Posterior cingulate gyrus (tissue), 11 donors: ENCODE measurements at regions of chr7 and their contacts with region 1.

Region 1: DNA sequence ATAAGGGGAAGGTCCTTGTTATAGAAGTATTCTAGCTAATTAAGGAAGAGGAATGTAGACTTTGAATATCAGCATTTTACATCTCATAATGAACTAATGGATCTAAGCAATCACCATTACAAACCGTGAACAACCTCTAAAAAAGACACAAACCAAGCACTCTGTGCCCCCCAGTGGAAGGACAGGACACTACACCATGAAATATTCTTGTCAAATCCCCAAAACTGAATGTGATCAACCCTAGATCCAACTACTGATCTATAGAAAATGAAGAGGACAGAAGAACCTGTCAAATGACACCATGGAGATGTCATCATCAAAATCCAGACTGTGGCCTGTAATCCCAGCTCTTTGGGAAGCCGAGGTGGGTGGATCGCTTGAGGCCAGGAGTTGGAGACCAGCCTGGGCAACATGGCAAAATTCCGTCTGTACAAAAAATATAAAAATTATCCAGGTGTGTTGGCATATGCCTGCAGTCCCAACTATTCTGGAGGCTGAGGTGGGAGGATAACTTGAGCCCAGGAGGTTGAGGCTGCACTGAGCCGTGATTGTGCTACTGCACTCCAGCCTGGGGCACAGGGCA is 111.3 kb upstream of the CARD11 start:
- DNase-seq: no peak

Region 2: GRCh38 chr7:2864999-2865670 is 289.9 kb before region 1 on chr7:
- intact Hi-C with region 1: loop called (anchors 5 kb)
- DNase-seq: peak in 8 of 10 donors; percentile 67 to 94 (median 76)